ENCODE measurements at regions of chr19 and their contacts with region 1.

Region 1: DNA sequence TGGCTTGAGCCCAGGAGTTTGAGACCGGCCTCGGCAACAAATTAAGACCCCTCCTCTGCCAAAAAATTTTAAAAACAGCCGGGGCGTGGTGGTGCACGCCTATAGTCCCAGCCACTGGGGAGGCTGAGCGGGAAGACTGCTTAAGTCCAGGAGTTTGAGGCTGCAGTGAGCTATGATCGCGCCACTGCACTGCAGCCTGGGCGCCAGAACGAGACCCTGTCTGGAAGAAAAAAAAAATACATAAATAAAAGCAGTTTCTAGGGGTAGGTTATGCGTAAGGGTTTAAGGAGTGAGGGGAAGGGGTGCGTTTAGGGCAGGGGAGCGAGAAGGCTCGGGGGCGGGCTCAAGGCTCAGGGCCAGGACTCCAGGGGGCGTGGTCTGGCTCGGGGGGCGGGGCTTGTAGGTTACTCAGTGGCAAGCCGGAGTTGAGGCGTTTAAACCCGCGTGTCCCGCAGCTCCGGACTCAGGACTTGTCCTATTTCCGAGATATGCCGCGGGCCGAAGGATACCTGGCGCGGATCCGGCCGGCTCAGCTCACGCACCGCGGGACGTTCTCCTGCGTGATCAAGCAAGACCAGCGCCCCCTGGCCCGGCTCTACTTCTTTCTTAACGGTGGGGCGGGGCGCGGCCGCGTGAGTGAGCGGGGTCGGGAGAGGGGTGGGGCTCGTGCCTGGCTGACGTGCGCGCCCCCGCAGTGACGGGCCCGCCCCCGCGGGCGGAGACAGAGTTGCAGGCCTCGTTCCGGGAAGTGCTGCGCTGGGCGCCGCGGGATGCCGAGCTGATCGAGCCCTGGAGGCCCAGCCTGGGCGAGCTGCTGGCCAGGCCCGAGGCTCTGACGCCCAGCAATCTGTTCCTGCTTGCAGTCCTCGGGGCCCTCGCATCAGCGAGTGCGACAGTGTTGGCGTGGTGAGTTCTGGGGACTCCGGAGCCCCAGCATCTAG is 10.7 kb downstream of the SPACA6 start:
- DNase-seq: peak; percentile 98
- ATAC-seq: peak; percentile 88
- H3K4me3 Mint-ChIP-seq: peak overlapping the region; percentile 94
- H3K27ac Mint-ChIP-seq: peak overlapping the region; percentile 95
- H3K4me1 Mint-ChIP-seq: peaks cover 33% of the 10 kb centered on the region
- H3K27me3 Mint-ChIP-seq: peaks cover 5% of the 10 kb centered on the region

Region 2: GRCh38 chr19:51367565-51368365 is 336.1 kb before region 1 on chr19:
- CTCF ChIA-PET with region 1: no interaction called
- POLR2A ChIA-PET with region 1: interaction called, 3 read pairs
- intact Hi-C with region 1: loop called in 1 of 2 experiments (anchors 1 kb)
- DNase-seq: peak; percentile 99
- ATAC-seq: peak; percentile 83
- H3K4me3 Mint-ChIP-seq: peak overlapping the region; percentile 90
- H3K27ac Mint-ChIP-seq: peak overlapping the region; percentile 97
- H3K4me1 Mint-ChIP-seq: peaks cover 58% of the 10 kb centered on the region
- H3K27me3 Mint-ChIP-seq: no peaks in the 10 kb centered on the region

Region 3: GRCh38 chr19:51681321-51682168 is 22.3 kb before region 1 on chr19:
- CTCF ChIA-PET with region 1: interaction called, 14 read pairs
- POLR2A ChIA-PET with region 1: no interaction called
- intact Hi-C with region 1: no loop called
- DNase-seq: no peak
- ATAC-seq: no peak
- H3K4me3 Mint-ChIP-seq: no peak overlapping the region
- H3K27ac Mint-ChIP-seq: no peak overlapping the region
- H3K4me1 Mint-ChIP-seq: peaks cover 6% of the 10 kb centered on the region
- H3K27me3 Mint-ChIP-seq: peaks cover 5% of the 10 kb centered on the region

Region 4: GRCh38 chr19:51784922-51785690 is 81.3 kb after region 1 on chr19:
- CTCF ChIA-PET with region 1: no interaction called
- POLR2A ChIA-PET with region 1: no interaction called
- intact Hi-C with region 1: loop called in 1 of 2 experiments (anchors 1 kb)
- DNase-seq: peak; percentile 87
- ATAC-seq: peak; percentile 97
- H3K4me3 Mint-ChIP-seq: no peak overlapping the region
- H3K27ac Mint-ChIP-seq: no peak overlapping the region
- H3K4me1 Mint-ChIP-seq: peaks cover 4% of the 10 kb centered on the region
- H3K27me3 Mint-ChIP-seq: peaks cover 16% of the 10 kb centered on the region

Region 5: DNA sequence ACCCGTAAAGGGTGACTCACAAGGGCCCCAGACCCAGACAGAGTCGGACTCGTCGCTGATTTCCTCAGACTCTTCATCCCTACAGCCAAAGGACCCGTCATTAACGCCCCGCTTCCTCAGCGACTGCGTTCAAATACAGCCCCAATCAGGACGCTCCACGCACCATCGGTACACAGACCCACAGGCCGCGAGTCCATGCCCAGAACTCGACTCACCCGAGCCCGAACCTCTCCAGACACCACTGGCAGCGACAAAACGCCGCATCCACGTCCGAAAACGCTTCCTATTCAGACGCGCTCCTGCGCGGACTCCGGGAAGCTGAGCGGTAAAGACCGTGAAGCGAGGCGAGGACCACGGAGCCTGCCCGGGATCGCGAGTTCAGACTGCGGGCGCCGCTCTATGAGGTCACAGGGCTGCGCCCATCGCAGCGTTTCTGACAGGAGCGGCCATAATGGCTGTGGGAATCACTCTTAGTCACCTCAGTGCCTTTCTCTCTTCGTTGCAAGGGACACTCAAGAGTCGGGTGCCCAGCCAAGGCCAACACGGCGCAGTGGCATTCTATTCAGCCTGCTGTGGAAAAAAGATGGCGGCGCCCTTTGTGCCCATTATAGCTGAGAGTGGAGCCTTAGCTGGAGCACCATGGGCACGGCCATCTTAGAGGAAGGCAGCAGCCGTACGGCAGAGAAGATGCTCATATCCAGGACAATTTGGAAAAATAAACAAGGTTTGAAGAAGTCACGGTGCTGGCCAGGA is 324.4 kb after region 1 on chr19 and contains the start of gene ZNF614:
- CTCF ChIA-PET with region 1: no interaction called
- POLR2A ChIA-PET with region 1: no interaction called
- intact Hi-C with region 1: loop called in 1 of 2 experiments (anchors 10 kb)
- DNase-seq: peak; percentile 93
- ATAC-seq: peak; percentile 94
- H3K4me3 Mint-ChIP-seq: peak within 1 kb of the TSS; percentile 81
- H3K27ac Mint-ChIP-seq: peak within 1 kb of the TSS; percentile 88
- H3K4me1 Mint-ChIP-seq: peaks cover 13% of the 10 kb centered on the region
- H3K27me3 Mint-ChIP-seq: no peaks in the 10 kb centered on the region
- total RNA-seq, gene ZNF614: 9.4 to 10.6 TPM

Measured in activated CD4-positive, alpha-beta T cell treated with anti-CD3 and anti-CD28 coated beads for 36 hours (primary cell).